ENCODE measurements at regions of chr11 and their contacts with region 1.

Region 1: GRCh38 chr11:114724916-114725524 is 46.7 kb downstream of the NXPE2 start:
- DNase-seq: no peak
- H3K4me3 ChIP-seq: no peak overlapping the region
- H3K27ac ChIP-seq: no peak overlapping the region
- H3K4me1 ChIP-seq: no peaks in the 10 kb centered on the region
- CTCF ChIP-seq: no peak

Region 2: GRCh38 chr11:113184498-113184897 is 1540.5 kb before region 1 on chr11:
- CTCF ChIA-PET with region 1: no interaction called
- POLR2A ChIA-PET with region 1: no interaction called
- intact Hi-C with region 1: loop called (anchors 5 kb)
- DNase-seq: no peak
- H3K4me3 ChIP-seq: no peak overlapping the region
- H3K27ac ChIP-seq: no peak overlapping the region
- H3K4me1 ChIP-seq: no peaks in the 10 kb centered on the region
- CTCF ChIP-seq: no peak